IMR-90 (cell line): ENCODE measurements at regions of chr5 and their contacts with region 1.

Region 1: GRCh38 chr5:78162253-78162862 is 132.1 kb downstream of the AP3B1 start:
- DNase-seq: peak; percentile 44
- ATAC-seq: no peak
- H3K4me3 ChIP-seq: no peak overlapping the region
- H3K27ac ChIP-seq: no peak overlapping the region
- H3K4me1 ChIP-seq: no peaks in the 10 kb centered on the region
- H3K27me3 ChIP-seq: no peaks in the 10 kb centered on the region
- CTCF ChIP-seq: peak; percentile 58
- POLR2A ChIP-seq: no peak
- RAD21 ChIP-seq: peak; percentile 62

Region 2: DNA sequence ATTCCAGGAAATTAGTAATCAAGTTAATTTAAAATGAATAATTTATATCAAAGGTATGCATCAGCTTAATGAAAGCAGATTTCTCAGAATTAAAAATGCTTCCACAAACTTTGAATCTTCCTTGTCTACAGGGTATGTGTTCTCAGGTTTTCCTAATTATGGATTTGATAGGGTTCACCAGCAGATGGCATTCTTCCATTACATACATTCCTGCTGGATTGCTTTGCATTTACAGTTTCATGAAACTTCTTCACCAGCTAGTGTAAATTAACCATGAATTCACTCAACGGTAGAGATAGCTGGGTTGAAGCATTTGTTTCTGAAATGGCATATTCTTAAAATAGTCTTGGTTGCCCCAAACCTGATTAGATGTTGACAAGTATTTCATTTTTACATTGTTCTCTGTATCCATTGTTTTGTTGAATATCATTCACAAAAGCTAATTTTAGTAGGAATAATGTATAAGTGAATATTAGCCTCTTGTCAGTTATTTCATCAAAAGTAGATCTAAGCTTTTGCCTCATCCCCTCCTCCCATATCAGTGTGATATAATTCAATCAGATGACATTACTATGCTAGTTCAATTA is 601.6 kb before region 1 on chr5:
- CTCF ChIA-PET with region 1: no interaction called
- POLR2A ChIA-PET with region 1: no interaction called
- dilution Hi-C with region 1: no loop called
- in situ Hi-C with region 1: no loop called
- intact Hi-C with region 1: loop called (anchors 2 kb)
- DNase-seq: peak; percentile 55
- ATAC-seq: peak; percentile 63
- H3K4me3 ChIP-seq: no peak overlapping the region
- H3K27ac ChIP-seq: no peak overlapping the region
- H3K4me1 ChIP-seq: no peaks in the 10 kb centered on the region
- H3K27me3 ChIP-seq: peaks cover 13% of the 10 kb centered on the region
- CTCF ChIP-seq: peak; percentile 65
- POLR2A ChIP-seq: no peak
- RAD21 ChIP-seq: peak; percentile 71

Region 3: GRCh38 chr5:78151594-78152271 is 10.6 kb before region 1 on chr5:
- CTCF ChIA-PET with region 1: no interaction called
- POLR2A ChIA-PET with region 1: no interaction called
- dilution Hi-C with region 1: no loop called
- in situ Hi-C with region 1: no loop called
- intact Hi-C with region 1: loop called (anchors 1 kb)
- DNase-seq: no peak
- ATAC-seq: no peak
- H3K4me3 ChIP-seq: no peak overlapping the region
- H3K27ac ChIP-seq: no peak overlapping the region
- H3K4me1 ChIP-seq: no peaks in the 10 kb centered on the region
- H3K27me3 ChIP-seq: no peaks in the 10 kb centered on the region
- CTCF ChIP-seq: no peak
- POLR2A ChIP-seq: no peak
- RAD21 ChIP-seq: no peak

Region 4: DNA sequence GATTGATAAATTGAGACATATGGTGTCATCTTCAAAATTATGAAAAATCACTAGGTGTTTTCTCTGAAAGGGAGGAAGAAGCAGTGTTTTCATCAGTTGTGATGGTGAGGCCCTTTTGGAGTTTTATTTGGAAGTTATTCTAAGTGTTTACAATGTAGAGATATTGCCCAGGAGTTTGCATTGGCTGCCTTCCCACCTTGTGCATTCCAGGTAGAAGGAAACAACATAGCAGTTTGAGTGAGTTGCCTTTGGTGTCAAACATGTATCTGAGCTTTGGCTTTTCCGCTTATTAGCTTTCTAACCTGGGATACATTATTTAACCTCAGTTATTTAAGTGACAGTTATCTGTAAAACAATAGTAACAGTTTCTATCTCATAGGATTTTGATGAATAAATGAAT is 320.6 kb after region 1 on chr5:
- CTCF ChIA-PET with region 1: no interaction called
- POLR2A ChIA-PET with region 1: no interaction called
- dilution Hi-C with region 1: no loop called
- in situ Hi-C with region 1: no loop called
- intact Hi-C with region 1: no loop called
- DNase-seq: no peak
- ATAC-seq: no peak
- H3K4me3 ChIP-seq: no peak overlapping the region
- H3K27ac ChIP-seq: no peak overlapping the region
- H3K4me1 ChIP-seq: peaks cover 2% of the 10 kb centered on the region
- H3K27me3 ChIP-seq: no peaks in the 10 kb centered on the region
- CTCF ChIP-seq: no peak
- POLR2A ChIP-seq: no peak
- RAD21 ChIP-seq: no peak